MCF 10A (cell line): ENCODE measurements at regions of chr11 and their contacts with region 1.

Region 1: DNA sequence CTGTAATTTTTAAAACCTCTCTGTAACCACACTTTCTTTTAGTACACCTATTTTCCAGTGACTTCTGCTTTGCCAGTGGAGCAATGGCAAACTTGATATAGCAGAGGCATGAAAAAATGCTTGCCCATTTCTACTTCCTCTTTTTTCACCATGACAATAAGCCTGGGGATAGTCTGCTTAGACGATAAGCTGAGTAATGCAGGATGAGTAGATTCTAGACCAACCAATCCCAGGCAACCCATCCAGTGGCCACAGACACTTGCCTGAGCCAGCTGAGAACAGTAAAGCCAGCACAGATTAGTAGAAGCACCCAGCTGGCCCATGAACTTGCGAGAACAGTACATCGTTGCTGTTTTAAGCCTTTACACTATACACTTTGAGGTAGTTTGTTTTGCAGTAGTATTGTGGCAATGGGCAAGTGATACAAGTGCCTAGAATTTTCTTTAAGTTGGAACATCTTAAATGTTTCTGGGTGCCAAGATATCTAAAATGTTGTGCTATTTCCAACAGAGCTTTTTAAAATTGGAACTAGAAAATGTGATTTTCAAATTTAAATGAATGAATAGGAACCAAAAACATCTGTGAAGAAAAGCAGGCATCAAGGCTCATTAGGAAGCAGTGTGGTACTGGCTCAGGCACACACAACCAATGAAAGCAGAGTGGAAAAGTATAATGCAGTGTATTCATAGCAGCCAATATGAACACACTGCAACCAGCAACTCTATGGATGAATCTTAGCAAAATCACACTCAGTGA is 37.7 kb downstream of the DDI1 start:
- DNase-seq: peak; percentile 50
- H3K4me3 Mint-ChIP-seq: no peak overlapping the region
- H3K27ac Mint-ChIP-seq: no peak overlapping the region
- H3K4me1 Mint-ChIP-seq: peaks cover 28% of the 10 kb centered on the region
- H3K27me3 Mint-ChIP-seq: no peaks in the 10 kb centered on the region
- CTCF ChIP-seq: no peak

Region 2: GRCh38 chr11:104091281-104092096 is 17.4 kb after region 1 on chr11:
- CTCF ChIA-PET with region 1: no interaction called
- POLR2A ChIA-PET with region 1: interaction called, 10 read pairs
- intact Hi-C with region 1: no loop called
- DNase-seq: no peak
- H3K4me3 Mint-ChIP-seq: no peak overlapping the region
- H3K27ac Mint-ChIP-seq: no peak overlapping the region
- H3K4me1 Mint-ChIP-seq: peaks cover 6% of the 10 kb centered on the region
- H3K27me3 Mint-ChIP-seq: no peaks in the 10 kb centered on the region
- CTCF ChIP-seq: no peak

Region 3: DNA sequence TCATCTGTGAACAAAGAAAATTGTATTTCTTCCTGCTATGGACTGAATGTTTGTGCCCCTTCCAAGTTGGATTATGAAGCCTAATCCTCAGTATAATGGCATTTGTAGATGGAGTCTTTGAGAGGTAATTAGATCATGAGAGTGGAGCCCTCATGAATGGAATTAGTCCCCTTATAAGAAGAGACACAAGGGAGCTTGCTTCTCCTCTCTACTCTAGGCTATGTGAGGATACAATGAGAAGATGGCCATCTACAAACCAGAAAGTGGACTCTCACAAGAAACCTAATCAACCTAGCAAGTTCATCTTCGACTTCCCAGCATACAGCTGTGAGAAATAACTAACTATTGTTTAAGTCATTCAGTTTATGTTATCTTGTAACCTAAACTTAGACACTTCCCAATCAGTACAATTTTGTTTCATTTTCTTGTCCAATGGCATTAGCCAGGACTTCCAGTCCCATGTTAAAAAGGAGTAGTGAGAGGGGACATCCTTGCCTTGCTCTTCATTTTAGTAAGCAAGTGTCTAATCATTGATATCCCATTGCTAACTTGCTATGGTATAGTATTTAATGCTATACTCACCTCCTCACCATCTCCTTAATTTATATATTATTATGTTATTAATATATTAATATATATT is 44.1 kb after region 1 on chr11:
- CTCF ChIA-PET with region 1: no interaction called
- POLR2A ChIA-PET with region 1: no interaction called
- intact Hi-C with region 1: no loop called
- DNase-seq: no peak
- H3K4me3 Mint-ChIP-seq: no peak overlapping the region
- H3K27ac Mint-ChIP-seq: no peak overlapping the region
- H3K4me1 Mint-ChIP-seq: no peaks in the 10 kb centered on the region
- H3K27me3 Mint-ChIP-seq: no peaks in the 10 kb centered on the region
- CTCF ChIP-seq: no peak